Vagina (tissue), 2 donors: ENCODE measurements at regions of chr11 and their contacts with region 1.

Region 1: DNA sequence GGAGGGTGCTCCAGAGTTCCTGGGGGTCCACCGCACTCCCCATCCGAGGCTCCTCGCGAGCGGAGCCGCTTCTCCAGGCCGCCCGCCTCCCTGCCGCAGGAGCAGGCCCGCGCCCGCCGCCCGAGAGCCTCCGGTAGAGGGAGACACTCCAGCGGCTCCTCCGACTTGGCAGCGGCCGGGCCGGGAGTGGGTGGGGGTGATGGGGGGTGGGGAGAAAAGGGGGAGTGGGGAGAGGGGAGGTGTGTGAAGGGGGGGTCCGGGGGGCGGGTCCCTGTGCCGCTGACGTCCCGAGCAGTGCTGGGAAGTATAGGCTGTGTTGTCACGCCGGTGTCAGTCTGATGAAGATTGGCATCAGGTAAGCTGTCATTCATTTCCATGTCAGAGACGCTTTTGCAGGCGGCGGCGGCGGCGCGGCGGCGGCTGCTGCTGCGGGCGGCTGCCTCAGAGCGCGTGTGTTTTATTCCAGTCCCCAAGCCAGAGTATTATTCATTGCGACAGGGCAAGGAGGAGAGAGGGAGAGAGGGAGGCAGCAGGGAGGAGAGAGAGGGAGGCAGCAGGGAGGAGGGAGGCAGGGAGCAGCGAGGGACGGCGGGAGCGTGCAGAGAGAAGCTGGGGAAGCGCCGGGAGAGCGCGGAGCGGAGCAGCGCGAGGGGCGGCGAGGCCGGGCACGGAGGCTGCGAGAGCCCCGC is at the start of gene PKNOX2:
- DNase-seq: no peak
- H3K4me3 ChIP-seq: peak within 1 kb of the TSS; percentile 64 to 82
- H3K27ac ChIP-seq: peak within 1 kb of the TSS; percentile 87
- H3K4me1 ChIP-seq: peaks cover 54% of the 10 kb centered on the region
- H3K27me3 ChIP-seq: no peaks in the 10 kb centered on the region
- CTCF ChIP-seq: peak in 2 of 3 experiments; percentile 27 to 72
- POLR2A ChIP-seq: peak in 1 of 2 donors; percentile 56
- total RNA-seq, gene PKNOX2: 3.4 TPM

Region 2: GRCh38 chr11:125102510-125102909 is 62.1 kb before region 1 on chr11:
- intact Hi-C with region 1: no loop called
- DNase-seq: no peak
- H3K4me3 ChIP-seq: no peak overlapping the region
- H3K27ac ChIP-seq: no peak overlapping the region
- H3K4me1 ChIP-seq: no peaks in the 10 kb centered on the region
- H3K27me3 ChIP-seq: no peaks in the 10 kb centered on the region
- CTCF ChIP-seq: no peak
- POLR2A ChIP-seq: no peak

Region 3: DNA sequence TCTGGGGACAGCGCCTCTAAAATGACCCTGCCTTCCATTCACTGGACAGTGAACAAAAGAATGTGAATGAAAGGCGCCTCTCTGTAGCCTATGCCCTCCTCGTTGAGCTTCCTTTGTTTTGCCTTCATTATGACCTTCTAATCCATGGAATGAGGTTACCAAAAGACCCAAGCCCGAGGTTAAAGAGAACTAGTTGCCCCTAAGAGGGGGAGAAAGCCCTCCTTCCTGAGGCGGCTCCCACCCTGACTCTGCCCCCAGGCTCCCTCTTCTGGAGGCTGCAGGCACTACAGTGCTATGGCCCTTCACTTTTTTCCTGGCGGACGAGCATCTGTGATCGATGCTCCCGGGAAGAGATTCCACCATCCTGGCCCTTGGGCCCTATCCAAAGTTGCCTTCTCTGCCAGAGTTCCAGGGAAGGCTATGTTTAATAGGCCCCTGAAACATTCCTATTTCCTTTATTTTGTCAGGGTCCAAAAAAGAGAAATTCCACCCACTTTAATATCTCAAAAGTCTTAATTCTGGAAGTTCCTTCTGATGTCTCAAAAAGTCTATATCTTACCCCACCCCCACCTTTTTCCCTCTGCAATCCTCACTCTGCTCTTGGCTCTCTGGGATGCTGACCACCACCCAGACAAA is 184.2 kb after region 1 on chr11:
- intact Hi-C with region 1: loop called (anchors 2 kb)
- DNase-seq: no peak
- H3K4me3 ChIP-seq: no peak overlapping the region
- H3K27ac ChIP-seq: no peak overlapping the region
- H3K4me1 ChIP-seq: peaks cover 17% of the 10 kb centered on the region
- H3K27me3 ChIP-seq: no peaks in the 10 kb centered on the region
- CTCF ChIP-seq: peak; percentile 46 to 68 (median 60)
- POLR2A ChIP-seq: no peak